Esophagus squamous epithelium (tissue), 5 donors: ENCODE measurements at regions of chr2 and their contacts with region 1.

Region 1: GRCh38 chr2:135916207-135916606 is 40.0 kb upstream of the MCM6 start:
- DNase-seq: no peak
- H3K4me3 ChIP-seq: no peak overlapping the region
- H3K27ac ChIP-seq: no peak overlapping the region
- H3K4me1 ChIP-seq: no peaks in the 10 kb centered on the region
- H3K27me3 ChIP-seq: no peaks in the 10 kb centered on the region
- CTCF ChIP-seq: peak in 3 of 6 experiments; percentile 31 to 58 (median 44)
- POLR2A ChIP-seq: no peak

Region 2: DNA sequence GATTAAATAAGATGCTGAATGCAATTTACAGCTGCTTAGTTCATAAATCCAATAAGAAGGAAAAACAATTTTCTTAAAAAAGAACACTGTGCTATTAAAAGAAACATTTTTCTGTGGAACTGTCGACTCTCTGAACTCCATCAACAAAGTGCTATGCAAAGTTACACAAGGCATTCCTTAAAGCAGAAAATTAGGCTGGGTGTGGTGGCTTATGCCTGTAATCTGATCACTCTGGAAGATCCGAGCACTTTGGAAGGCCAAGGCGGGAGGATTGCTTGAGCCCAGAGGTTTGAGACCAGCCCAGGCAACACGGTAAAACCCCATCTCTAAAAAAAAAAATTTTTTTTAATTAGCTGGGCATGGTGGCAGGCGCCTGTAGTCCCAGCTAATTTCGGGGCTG is 53.0 kb before region 1 on chr2:
- intact Hi-C with region 1: no loop called
- DNase-seq: no peak
- H3K4me3 ChIP-seq: no peak overlapping the region
- H3K27ac ChIP-seq: no peak overlapping the region
- H3K4me1 ChIP-seq: no peaks in the 10 kb centered on the region
- H3K27me3 ChIP-seq: no peaks in the 10 kb centered on the region
- CTCF ChIP-seq: no peak
- POLR2A ChIP-seq: no peak

Region 3: GRCh38 chr2:136378712-136379595 is 462.7 kb after region 1 on chr2:
- intact Hi-C with region 1: loop called (anchors 5 kb)
- DNase-seq: no peak
- H3K4me3 ChIP-seq: no peak overlapping the region
- H3K27ac ChIP-seq: no peak overlapping the region
- H3K4me1 ChIP-seq: peaks cover 0 to 8% (median 3%) of the 10 kb centered on the region in 3 donors
- H3K27me3 ChIP-seq: no peaks in the 10 kb centered on the region
- CTCF ChIP-seq: peak; percentile 33 to 75 (median 70)
- POLR2A ChIP-seq: no peak